ENCODE measurements at regions of chr2 and their contacts with region 1.

Region 1: GRCh38 chr2:30601375-30601774 is 154.3 kb downstream of the LCLAT1 start:
- DNase-seq: no peak
- ATAC-seq: no peak
- H3K4me3 ChIP-seq: no peak overlapping the region
- H3K4me3 Mint-ChIP-seq: no peak overlapping the region
- H3K27ac ChIP-seq: no peak overlapping the region
- H3K27ac Mint-ChIP-seq: no peak overlapping the region
- H3K4me1 ChIP-seq: no peaks in the 10 kb centered on the region
- H3K4me1 Mint-ChIP-seq: no peaks in the 10 kb centered on the region
- H3K27me3 ChIP-seq: no peaks in the 10 kb centered on the region
- H3K27me3 Mint-ChIP-seq: no peaks in the 10 kb centered on the region

Region 2: DNA sequence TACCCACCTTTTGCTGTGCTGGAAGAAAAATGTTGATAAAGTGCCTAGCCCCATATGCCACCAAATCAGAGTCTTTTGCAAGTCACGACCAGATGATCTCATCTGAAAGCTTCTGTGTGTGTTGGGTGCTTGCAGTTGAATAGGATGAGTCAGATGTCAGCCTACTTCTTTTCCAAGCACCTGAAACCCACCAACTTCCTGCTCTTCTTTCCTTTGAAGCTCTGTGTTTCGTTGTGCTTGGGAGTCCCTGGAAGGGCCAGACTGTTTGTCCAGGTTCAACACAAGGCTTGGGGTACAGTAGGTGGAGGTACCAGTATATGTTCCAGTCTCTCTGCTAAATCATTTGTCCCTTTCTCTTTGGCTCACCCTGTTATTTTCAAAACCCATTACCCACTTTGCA is 191.2 kb before region 1 on chr2:
- CTCF ChIA-PET with region 1: no interaction called
- POLR2A ChIA-PET with region 1: no interaction called
- DNase-seq: peak in 1 of 35 experiments; percentile 19
- ATAC-seq: peak in 3 of 4 experiments; percentile 47 to 84 (median 77)
- H3K4me3 ChIP-seq: no peak overlapping the region
- H3K4me3 Mint-ChIP-seq: no peak overlapping the region
- H3K27ac ChIP-seq: no peak overlapping the region
- H3K27ac Mint-ChIP-seq: peak overlapping the region; percentile 76 to 82
- H3K4me1 ChIP-seq: peaks cover 3 to 6% of the 10 kb centered on the region in 2 experiments
- H3K4me1 Mint-ChIP-seq: peaks cover 31 to 47% (median 37%) of the 10 kb centered on the region in 3 donors
- H3K27me3 ChIP-seq: no peaks in the 10 kb centered on the region
- H3K27me3 Mint-ChIP-seq: no peaks in the 10 kb centered on the region

Region 3: DNA sequence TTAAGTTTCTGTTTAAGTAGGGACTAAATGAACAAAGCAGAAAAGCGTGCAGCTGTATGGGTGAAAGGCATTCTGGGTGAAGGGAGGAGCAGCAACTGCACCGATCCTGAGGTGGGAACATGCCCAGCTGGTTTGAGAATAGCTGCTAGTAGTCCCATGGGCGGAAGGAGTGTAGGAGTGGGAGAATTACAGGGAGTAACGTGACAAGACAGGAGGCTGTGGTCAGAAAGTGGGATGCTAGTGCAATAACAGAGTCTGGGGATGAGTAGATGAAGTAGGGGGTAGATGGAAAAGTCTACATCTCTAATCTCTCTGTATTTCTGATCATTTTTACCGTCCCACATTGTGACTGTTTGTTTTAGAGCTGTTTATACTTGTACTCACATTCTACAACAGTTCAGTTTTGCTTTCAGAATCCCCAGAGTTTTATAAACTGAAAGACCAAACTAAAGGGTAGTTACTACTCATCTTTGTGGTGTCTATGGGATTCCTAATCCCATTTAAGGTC is 35.5 kb before region 1 on chr2:
- CTCF ChIA-PET with region 1: no interaction called
- POLR2A ChIA-PET with region 1: interaction called in 1 of 2 experiments, 11 read pairs
- DNase-seq: no peak
- ATAC-seq: no peak
- H3K4me3 ChIP-seq: no peak overlapping the region
- H3K4me3 Mint-ChIP-seq: no peak overlapping the region
- H3K27ac ChIP-seq: no peak overlapping the region
- H3K27ac Mint-ChIP-seq: no peak overlapping the region
- H3K4me1 ChIP-seq: no peaks in the 10 kb centered on the region
- H3K4me1 Mint-ChIP-seq: peaks cover 0 to 17% (median 3%) of the 10 kb centered on the region in 3 donors
- H3K27me3 ChIP-seq: no peaks in the 10 kb centered on the region
- H3K27me3 Mint-ChIP-seq: no peaks in the 10 kb centered on the region

Region 4: GRCh38 chr2:30577151-30577550 is 24.2 kb before region 1 on chr2:
- CTCF ChIA-PET with region 1: no interaction called
- POLR2A ChIA-PET with region 1: no interaction called
- DNase-seq: no peak
- ATAC-seq: no peak
- H3K4me3 ChIP-seq: no peak overlapping the region
- H3K4me3 Mint-ChIP-seq: no peak overlapping the region
- H3K27ac ChIP-seq: no peak overlapping the region
- H3K27ac Mint-ChIP-seq: no peak overlapping the region
- H3K4me1 ChIP-seq: no peaks in the 10 kb centered on the region
- H3K4me1 Mint-ChIP-seq: peaks cover 13 to 28% (median 23%) of the 10 kb centered on the region in 3 donors
- H3K27me3 ChIP-seq: no peaks in the 10 kb centered on the region
- H3K27me3 Mint-ChIP-seq: no peaks in the 10 kb centered on the region